G401 (cell line): ENCODE measurements at regions of chr1 and their contacts with region 1.

Region 1: DNA sequence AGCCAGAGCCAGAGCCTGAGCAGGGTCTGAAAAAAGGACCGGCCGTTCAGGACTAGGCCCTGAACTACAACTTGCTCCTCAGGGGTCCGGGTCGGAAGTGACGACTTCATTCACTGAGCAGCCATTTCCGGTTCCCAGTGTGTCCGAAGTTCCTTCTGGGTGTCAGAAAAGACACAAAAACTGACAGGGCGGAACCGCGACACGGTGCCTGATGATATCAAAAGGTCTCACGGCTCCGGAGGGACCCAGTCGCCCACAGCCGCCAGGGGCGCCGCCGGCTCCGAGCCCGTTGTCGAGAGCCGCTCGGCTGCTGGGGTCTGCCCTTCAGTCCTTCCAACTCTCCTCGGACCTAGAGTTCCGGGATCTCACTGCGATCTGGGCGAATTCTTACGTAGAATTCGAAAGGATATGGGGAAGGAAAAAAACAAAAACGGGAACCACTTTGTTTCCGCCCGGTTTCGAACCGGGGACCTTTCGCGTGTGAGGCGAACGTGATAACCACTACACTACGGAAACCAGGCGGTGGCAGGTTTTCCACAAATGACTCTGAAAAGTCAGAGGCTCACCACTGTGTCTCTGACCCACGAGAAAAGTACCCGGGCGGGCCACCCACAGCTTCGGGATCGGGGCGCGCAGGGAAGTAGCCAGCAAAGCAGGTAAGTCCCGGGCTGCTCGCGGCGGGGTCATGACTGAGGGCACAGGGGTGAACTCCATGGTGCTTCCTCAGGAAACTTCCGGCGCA is 31.8 kb upstream of the CFAP126 start:
- DNase-seq: peak; percentile 95

Region 2: GRCh38 chr1:161201828-161202725 is 197.4 kb before region 1 on chr1 and contains the start of gene NDUFS2:
- in situ Hi-C with region 1: loop called (anchors 25 kb)
- DNase-seq: peak; percentile 99
- total RNA-seq, gene NDUFS2: 215 and 238 TPM in 2 replicates

Region 3: DNA sequence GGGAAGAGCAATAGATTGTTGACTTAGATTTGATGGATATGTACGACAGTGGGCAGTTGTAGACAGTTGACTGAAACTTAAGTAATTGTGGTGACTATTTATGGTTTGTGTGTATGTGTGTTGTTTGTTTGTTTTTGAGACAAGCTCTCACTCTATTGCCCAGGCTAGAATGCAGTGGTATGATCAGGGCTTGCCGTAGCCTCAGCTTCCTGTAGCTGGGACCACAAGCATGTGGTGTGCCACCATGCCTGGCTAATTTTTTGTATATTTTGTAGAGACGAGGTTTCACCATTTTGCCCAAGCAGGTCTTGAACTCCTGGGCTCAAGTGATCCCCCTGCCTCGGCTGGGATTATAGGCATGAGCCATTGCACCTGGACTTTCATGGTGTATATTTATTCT is 75.4 kb before region 1 on chr1:
- in situ Hi-C with region 1: no loop called
- DNase-seq: no peak